Activated CD4-positive, alpha-beta T cell treated with anti-CD3 and anti-CD28 coated beads, Interleukin-2, amount 10 ng/mL, durations not matched to agents 24 days and 14 days (primary cell): ENCODE measurements at regions of chrX and their contacts with region 1.

Region 1: DNA sequence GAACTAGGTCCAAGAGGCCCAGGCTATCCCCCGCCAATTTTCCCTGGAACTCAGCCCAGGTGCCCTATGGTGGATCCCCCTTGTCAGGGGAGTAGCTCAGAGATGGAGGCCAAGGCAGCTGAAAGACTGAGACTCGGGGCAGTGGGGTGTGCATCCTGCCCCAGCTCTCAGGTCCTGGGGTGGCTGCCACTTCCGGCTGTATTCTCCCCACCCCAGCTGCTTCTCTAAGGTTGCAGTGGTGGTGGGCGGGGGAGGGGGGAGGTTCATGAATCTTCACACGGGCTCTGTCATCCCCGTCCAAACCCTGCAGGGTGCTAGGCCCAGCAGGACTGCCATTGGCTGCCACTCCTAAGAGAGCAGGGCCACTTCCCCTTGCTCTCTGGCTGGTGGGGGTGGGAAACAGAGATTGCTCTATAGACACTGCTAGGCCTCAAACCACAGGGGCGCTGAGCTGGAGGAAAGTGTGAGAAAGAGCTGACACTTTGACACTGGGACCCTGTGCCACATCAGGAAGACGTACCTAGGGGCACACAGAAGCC is 1.5 kb downstream of the SASH3 start:
- DNase-seq: peak; percentile 90
- H3K4me3 Mint-ChIP-seq: peak overlapping the region; percentile 90
- H3K27ac Mint-ChIP-seq: peak overlapping the region; percentile 95
- H3K4me1 Mint-ChIP-seq: peaks cover 54% of the 10 kb centered on the region
- H3K27me3 Mint-ChIP-seq: no peaks in the 10 kb centered on the region

Region 2: DNA sequence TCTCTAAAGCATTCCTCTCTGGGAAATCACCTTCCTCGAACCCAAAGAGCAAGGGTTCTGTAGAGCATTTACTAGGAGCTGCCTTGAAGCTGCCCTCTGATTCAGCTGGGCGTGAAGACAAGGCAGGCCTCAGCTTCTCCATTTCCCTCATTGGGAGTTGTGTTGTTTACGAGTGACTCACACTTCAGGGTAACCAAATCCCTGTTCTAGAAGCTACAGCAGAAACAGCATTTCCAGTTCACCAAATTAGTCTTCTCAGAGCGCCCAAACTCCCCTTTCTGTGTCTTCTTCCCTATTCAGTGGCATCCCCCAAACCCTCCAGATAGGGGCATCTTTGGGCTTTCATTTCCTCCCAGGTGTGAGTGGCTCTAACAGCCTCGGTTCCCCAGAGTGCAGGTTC is 43.3 kb before region 1 on chrX:
- intact Hi-C with region 1: loop called (anchors 5 kb)
- DNase-seq: no peak
- H3K4me3 Mint-ChIP-seq: peak overlapping the region; percentile 23
- H3K27ac Mint-ChIP-seq: no peak overlapping the region
- H3K4me1 Mint-ChIP-seq: peaks cover 29% of the 10 kb centered on the region
- H3K27me3 Mint-ChIP-seq: no peaks in the 10 kb centered on the region

Region 3: GRCh38 chrX:129759576-129760061 is 21.6 kb before region 1 on chrX:
- intact Hi-C with region 1: loop called (anchors 1 kb)
- DNase-seq: peak; percentile 87
- H3K4me3 Mint-ChIP-seq: peak overlapping the region; percentile 44
- H3K27ac Mint-ChIP-seq: peak overlapping the region; percentile 93
- H3K4me1 Mint-ChIP-seq: peaks cover 43% of the 10 kb centered on the region
- H3K27me3 Mint-ChIP-seq: no peaks in the 10 kb centered on the region

Region 4: DNA sequence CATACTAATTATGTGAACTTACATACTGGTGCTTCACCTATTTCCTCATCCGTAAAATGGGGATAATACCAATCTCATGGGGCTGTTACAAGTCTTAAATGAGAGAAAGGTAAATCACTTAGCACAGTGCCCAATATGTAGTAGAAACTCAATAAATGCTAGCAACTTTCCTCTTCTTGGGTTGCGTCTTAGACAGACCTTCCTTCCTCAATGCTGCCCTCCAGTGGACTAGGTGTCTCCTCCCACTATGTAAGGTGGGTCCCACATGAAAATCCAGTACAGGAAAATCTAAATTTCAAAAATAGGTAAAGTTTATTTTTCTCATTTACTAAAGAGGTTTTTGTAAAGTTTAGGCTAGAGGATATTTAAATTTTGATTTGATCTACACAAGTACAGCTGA is 41.9 kb after region 1 on chrX:
- intact Hi-C with region 1: loop called (anchors 2 kb)
- DNase-seq: peak; percentile 83
- H3K4me3 Mint-ChIP-seq: no peak overlapping the region
- H3K27ac Mint-ChIP-seq: no peak overlapping the region
- H3K4me1 Mint-ChIP-seq: peaks cover 10% of the 10 kb centered on the region
- H3K27me3 Mint-ChIP-seq: no peaks in the 10 kb centered on the region

Region 5: DNA sequence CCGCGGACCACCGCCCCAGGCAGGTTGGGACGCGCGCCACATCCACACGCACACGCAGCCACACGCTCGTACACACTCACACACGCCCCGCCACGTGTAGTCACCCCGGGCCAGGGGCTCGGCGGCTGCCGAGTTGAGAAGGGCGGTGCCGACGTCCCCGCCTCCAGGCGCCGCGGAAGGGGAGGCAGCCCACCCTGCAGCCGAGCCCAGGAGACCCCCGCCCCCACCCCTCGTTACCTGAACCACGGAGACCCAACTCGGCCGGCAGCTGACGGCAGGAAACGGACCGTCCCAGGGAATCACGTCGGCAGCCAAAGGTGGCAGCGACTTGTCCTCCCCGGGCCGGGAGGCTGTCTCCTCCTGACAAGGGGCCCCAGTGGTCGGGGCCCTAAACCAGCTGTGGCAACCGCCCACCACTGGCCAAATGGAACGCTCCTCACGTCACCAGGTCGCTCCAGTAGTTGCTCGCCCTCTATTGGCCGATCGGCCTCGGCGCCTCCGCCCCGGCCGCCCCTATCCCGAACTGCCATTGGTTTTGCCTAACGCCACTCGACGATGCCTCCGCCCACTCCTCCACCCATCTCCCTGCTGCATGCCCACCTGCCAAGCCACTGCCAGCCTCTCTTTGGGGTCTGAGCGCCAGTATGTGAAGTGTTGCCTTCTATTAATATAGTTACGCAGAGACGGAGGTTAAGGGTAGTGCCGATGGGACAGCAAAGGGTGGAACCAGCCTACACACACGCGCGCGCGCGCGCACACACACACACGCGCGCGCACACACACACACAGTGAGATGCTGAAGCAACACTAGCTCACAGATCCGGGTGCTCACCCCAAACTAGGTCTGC is 62.5 kb after region 1 on chrX and contains the start of gene ZDHHC9:
- intact Hi-C with region 1: loop called (anchors 2 kb)
- DNase-seq: peak; percentile 95
- H3K4me3 Mint-ChIP-seq: peak within 1 kb of the TSS; percentile 91
- H3K27ac Mint-ChIP-seq: peak within 1 kb of the TSS; percentile 89
- H3K4me1 Mint-ChIP-seq: peaks cover 24% of the 10 kb centered on the region
- H3K27me3 Mint-ChIP-seq: peaks cover 9% of the 10 kb centered on the region
- total RNA-seq, gene ZDHHC9: 13.4 and 14.6 TPM in 2 replicates

Region 6: DNA sequence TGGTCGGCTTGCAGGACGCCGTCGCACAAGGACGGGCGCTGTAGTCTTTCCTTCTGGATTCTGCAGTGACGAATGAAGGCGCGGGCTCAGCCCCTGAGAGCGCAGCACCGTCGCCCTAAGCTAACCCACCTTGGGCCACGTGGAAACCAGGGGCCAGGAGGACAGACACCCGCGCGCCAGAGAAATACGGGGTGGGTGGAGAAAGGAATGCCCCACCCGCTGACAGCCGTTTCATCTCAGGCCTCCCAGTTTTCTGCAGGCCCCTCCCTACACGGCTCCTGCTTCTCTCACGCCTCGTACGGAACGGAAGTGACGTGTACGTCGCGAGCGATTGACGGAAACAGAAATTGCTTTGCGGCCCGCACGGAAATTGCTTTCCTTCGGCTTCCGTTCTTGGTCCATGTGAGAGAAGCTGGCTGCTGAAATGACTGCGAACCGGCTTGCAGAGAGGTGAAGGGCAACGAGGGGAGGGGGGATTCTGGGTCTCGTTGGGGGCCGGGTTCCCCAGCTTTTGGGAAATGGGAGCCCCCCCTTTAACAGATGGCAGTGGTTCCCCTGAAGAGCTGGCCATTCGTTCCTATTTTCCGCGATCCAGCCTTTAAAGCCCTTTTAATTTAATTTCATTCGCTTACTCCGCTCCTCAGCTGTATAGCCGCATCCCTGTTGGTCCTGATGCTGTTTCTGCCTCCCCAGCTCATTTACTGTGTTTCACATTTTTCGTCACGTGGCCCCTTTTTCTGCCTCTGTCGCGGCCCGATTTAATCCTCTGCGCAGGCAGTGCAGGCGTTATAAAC is 124.8 kb after region 1 on chrX and contains the start of gene UTP14A:
- intact Hi-C with region 1: loop called (anchors 5 kb)
- DNase-seq: peak; percentile 95
- H3K4me3 Mint-ChIP-seq: peak within 1 kb of the TSS; percentile 90
- H3K27ac Mint-ChIP-seq: peak within 1 kb of the TSS; percentile 95
- H3K4me1 Mint-ChIP-seq: peaks cover 11% of the 10 kb centered on the region
- H3K27me3 Mint-ChIP-seq: no peaks in the 10 kb centered on the region
- total RNA-seq, gene UTP14A: 57.9 and 58.1 TPM in 2 replicates

Region 7: GRCh38 chrX:130413415-130413814 is 632.2 kb after region 1 on chrX:
- intact Hi-C with region 1: no loop called
- DNase-seq: no peak
- H3K4me3 Mint-ChIP-seq: no peak overlapping the region
- H3K27ac Mint-ChIP-seq: no peak overlapping the region
- H3K4me1 Mint-ChIP-seq: no peaks in the 10 kb centered on the region
- H3K27me3 Mint-ChIP-seq: no peaks in the 10 kb centered on the region